ENCODE measurements at regions of chr11 and their contacts with region 1.

Region 1: DNA sequence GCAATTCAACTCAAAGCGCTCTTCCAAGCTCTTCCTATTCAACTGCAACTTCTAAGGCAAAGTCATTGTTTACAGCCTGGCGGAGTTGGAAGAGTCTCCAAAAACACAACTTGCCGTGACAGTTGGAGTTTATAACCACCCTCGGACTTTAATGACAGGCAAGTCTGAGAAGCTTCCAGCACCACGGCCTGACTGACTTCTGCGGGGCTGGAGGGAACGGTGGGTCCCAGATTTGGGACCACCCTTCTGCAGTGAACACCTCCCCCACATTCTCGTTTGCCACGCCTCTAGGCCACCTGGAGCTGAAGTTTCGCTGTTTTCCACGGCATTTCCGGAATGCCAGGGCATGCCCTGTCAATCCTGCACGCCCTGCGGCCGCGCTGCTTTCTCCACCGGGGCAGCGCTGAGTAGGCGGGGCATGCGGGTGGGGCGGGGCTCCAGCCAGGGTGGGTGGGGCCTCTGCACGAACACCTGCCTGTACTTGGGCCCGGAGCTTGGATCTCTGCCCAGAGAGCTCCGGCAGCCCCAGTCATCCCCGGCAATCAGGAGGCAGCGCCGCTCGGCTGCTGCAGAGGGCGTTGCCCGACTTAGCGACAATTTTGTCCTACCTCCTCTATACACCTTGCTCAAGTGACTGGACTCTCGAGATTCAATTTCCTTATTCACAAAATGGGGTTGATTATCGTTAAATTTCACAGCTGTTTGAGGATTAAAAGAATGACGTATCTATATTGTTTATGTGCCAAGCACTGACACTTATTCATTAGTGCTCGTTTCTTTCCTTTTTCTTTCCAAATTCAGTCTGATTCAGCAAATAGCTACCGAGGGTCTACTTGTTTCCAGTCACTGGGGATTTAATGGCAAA is 48.7 kb upstream of the BIRC3 start:
- DNase-seq: peak; percentile 92
- ATAC-seq: peak; percentile 92
- H3K4me3 ChIP-seq: peak overlapping the region; percentile 34 to 55
- H3K27ac ChIP-seq: peak overlapping the region; percentile 47
- H3K4me1 ChIP-seq: peaks cover 17 to 34% of the 10 kb centered on the region in 2 experiments
- H3K27me3 ChIP-seq: no peaks in the 10 kb centered on the region
- CTCF ChIP-seq: peak; percentile 52 to 61 (median 53)
- POLR2A ChIP-seq: no peak
- RAD21 ChIP-seq: peak; percentile 84

Region 2: GRCh38 chr11:102109896-102110760 is 158.4 kb before region 1 on chr11 and contains the start of gene YAP1:
- CTCF ChIA-PET with region 1: interaction called, 4 read pairs
- POLR2A ChIA-PET with region 1: no interaction called
- RAD21 ChIA-PET with region 1: no interaction called
- intact Hi-C with region 1: loop called (anchors 5 kb)
- DNase-seq: peak; percentile 77
- ATAC-seq: peak; percentile 56
- H3K4me3 ChIP-seq: peak within 1 kb of the TSS; percentile 82 to 83
- H3K27ac ChIP-seq: peak within 1 kb of the TSS; percentile 100
- H3K4me1 ChIP-seq: peaks cover 33 to 52% of the 10 kb centered on the region in 2 experiments
- H3K27me3 ChIP-seq: no peaks in the 10 kb centered on the region
- CTCF ChIP-seq: no peak
- POLR2A ChIP-seq: peak; percentile 37
- RAD21 ChIP-seq: 0 out of 2 replicates have a peak, but pooled peaks have one; percentile 42
- total RNA-seq, gene YAP1: 88.6 TPM

Region 3: DNA sequence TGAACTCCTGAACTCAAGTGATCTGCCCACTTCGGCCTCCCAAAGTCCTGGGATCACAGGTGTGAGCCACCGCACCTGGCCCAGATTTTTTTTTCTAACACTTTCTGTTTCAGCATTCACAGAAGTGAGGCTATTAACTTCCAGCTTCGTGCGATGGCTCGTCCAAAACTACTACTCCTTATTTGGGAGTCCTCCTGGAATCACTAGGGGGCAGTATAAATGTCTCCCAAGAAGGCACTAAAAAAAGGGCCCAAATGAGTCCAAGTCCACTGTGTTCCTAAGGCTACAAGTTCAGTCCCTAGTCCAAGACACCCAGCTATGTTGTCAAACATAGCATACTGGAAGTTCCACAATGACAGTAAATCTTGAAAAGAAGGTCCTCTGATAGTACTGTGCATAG is 14.5 kb before region 1 on chr11:
- CTCF ChIA-PET with region 1: interaction called, 23 read pairs
- POLR2A ChIA-PET with region 1: interaction called, 6 read pairs
- RAD21 ChIA-PET with region 1: no interaction called
- intact Hi-C with region 1: no loop called
- DNase-seq: peak; percentile 46
- ATAC-seq: peak; percentile 56
- H3K4me3 ChIP-seq: no peak overlapping the region
- H3K27ac ChIP-seq: no peak overlapping the region
- H3K4me1 ChIP-seq: peaks cover 22 to 37% of the 10 kb centered on the region in 2 experiments
- H3K27me3 ChIP-seq: no peaks in the 10 kb centered on the region
- CTCF ChIP-seq: peak; percentile 13 to 63 (median 57); a peak in 5 of 6 replicates
- POLR2A ChIP-seq: no peak
- RAD21 ChIP-seq: peak; percentile 34

Measured in HCT116 (cell line).